Dorsolateral prefrontal cortex (tissue), 120 donors: ENCODE measurements at regions of chr15 and their contacts with region 1.

Region 1: GRCh38 chr15:88274553-88275460 is 18.3 kb upstream of the NTRK3 start:
- DNase-seq: peak; percentile 62 to 84 (median 74)
- H3K4me3 ChIP-seq: no peak overlapping the region
- H3K27ac ChIP-seq: peak overlapping the region in 38 of 59 donors; percentile 1 to 74 (median 34)
- H3K27me3 ChIP-seq: no peaks in the 10 kb centered on the region
- CTCF ChIP-seq: peak; percentile 66 to 97 (median 87)

Region 2: DNA sequence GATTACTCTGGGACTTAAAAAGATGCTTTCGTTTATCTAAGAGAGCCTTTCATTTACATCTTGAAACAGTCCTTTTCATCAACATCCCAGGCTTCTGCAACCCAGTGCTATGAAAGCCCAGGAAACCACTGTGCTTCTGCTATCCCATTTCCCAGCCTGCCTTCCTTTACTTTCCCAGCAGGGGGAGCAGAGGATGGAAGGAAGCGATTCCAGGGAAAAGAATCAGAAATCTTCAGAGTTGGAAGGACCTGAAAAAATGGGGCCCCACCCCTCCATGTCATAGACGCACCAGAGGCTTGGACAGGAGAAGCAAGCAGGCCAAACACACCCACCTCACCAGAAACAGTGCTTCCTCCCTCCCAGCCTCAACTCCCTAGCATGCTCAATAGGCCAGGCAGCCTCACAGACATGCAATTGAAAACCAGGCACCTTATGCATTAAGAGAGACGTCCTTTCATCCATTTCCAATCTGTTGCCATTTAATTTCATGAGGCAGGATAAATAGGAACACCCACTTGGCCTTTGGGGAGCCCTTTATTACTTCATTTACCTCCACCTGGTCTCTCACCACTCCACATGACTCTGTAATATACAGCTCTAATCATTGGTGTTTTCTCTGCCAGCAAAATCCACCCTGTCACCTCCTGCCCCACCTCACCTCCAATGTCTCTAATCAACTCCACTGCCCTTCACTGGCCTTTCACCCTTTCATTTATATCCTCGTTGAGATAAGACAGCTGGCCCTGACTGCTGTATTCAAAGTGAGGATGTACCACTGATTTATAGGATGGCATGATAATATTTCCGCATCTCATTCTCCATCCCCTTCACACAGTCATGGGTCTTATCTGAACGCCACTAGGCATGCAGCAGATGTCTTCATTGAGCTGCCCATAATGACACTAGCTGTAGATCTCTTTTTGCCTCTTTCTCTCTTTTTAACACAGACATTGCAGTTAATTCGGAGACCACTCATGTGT is 602.2 kb before region 1 on chr15:
- intact Hi-C with region 1: loop called in 1 of 2 experiments (anchors 10 kb)
- DNase-seq: peak in 5 of 10 donors; percentile 6 to 46 (median 32)
- H3K4me3 ChIP-seq: no peak overlapping the region
- H3K27ac ChIP-seq: no peak overlapping the region
- H3K27me3 ChIP-seq: peaks cover 0 to 2% (median 0%) of the 10 kb centered on the region in 45 donors
- CTCF ChIP-seq: peak in 55 of 56 donors; percentile 22 to 71 (median 56)

Region 3: GRCh38 chr15:88083811-88084760 is 190.7 kb before region 1 on chr15:
- intact Hi-C with region 1: no loop called
- DNase-seq: no peak
- H3K4me3 ChIP-seq: no peak overlapping the region
- H3K27ac ChIP-seq: peak overlapping the region in 25 of 59 donors; percentile 7 to 69 (median 34)
- H3K27me3 ChIP-seq: no peaks in the 10 kb centered on the region
- CTCF ChIP-seq: no peak

Region 4: DNA sequence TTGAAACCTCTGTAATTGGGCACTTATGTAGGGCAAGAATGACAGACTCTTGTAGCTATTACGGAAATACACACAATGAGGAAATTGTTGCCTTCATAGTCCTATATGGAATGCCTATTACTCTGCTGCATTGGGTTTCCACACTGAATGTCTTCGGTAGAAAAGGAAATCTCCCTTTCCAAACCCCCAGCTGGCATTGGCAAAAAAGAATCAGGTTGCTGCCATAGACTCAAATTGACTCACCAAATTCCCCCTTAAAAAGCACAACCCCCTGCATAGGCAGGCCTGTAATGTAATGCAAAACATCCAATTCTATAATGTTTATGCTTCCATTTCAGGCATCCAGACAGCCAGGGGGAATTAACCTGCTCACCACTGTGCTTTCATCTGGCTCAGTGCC is 26.5 kb after region 1 on chr15:
- intact Hi-C with region 1: loop called in 1 of 2 experiments (anchors 1 kb)
- DNase-seq: peak in 1 of 10 donors; percentile 15
- H3K4me3 ChIP-seq: peak overlapping the region in 1 of 59 donors; percentile 13
- H3K27ac ChIP-seq: peak overlapping the region in 37 of 59 donors; percentile 1 to 80 (median 53)
- H3K27me3 ChIP-seq: peaks cover 0 to 3% (median 0%) of the 10 kb centered on the region in 45 donors
- CTCF ChIP-seq: no peak

Region 5: DNA sequence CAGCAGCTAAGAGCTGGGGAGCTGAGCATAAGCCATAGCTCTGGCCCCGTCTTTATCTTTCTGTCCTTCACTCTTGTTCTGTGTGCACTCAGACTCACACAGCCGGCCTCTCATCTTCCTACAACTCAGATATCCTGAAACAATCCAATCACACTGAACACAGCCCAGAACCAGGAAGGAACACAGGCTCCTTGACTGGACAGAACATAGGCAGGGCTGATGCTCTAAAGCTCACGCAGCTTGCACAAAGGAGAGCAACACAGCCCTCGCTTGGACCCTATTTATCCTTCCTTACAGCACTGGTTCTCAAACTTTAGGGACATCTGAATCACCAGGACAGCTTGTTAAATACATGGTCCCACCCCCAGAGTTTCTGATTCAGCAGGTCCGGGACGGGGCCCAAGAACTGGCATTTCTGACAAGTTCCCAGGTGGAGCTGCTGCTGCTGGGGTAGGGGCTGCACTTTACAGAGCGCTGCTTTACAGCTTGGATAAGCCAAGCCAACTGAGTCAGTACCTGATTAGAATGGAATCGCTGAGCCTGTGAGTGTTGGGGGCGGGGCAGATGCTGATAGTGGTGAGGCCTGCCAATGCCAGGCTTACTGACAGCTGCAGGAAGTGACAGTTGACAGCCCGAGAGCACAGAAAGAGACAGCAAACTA is 127.3 kb after region 1 on chr15:
- intact Hi-C with region 1: loop called in 1 of 2 experiments (anchors 2 kb)
- DNase-seq: peak in 9 of 10 donors; percentile 22 to 75 (median 59)
- H3K4me3 ChIP-seq: peak overlapping the region in 1 of 59 donors; percentile 26
- H3K27ac ChIP-seq: peak overlapping the region in 51 of 59 donors; percentile 2 to 92 (median 72)
- H3K27me3 ChIP-seq: peaks cover 0 to 8% (median 0%) of the 10 kb centered on the region in 45 donors
- CTCF ChIP-seq: no peak